Common myeloid progenitor, CD34-positive (primary cell): ENCODE measurements at regions of chr15 and their contacts with region 1.

Region 1: GRCh38 chr15:63752075-63752684 is 81.6 kb downstream of the HERC1 start:
- DNase-seq: peak; percentile 41 to 81 (median 76)
- H3K4me3 ChIP-seq: no peak overlapping the region
- H3K27ac ChIP-seq: no peak overlapping the region
- H3K4me1 ChIP-seq: no peaks in the 10 kb centered on the region
- H3K27me3 ChIP-seq: no peaks in the 10 kb centered on the region

Region 2: DNA sequence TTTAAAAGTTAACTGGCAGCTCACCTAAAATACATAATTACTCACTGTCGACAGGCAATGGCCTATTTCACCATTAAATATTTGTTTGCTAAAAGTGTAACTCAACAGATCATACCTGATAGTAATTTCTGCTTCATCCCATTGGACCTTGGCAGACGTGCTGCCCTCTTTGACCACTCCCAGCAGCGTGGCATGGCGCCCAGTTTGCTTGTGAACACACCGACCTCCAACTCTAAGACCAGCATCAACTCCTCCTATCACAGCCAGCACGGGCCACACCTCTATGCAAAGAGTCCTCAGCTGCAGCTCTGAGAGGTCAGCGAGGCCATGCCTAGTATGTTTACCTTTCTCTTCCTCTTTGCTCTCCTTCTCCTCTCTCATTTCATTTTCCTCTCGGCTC is 74.5 kb before region 1 on chr15:
- CTCF ChIA-PET with region 1: no interaction called
- POLR2A ChIA-PET with region 1: no interaction called
- DNase-seq: no peak
- H3K4me3 ChIP-seq: no peak overlapping the region
- H3K27ac ChIP-seq: no peak overlapping the region
- H3K4me1 ChIP-seq: no peaks in the 10 kb centered on the region
- H3K27me3 ChIP-seq: no peaks in the 10 kb centered on the region

Region 3: GRCh38 chr15:63735449-63735848 is 16.7 kb before region 1 on chr15:
- CTCF ChIA-PET with region 1: interaction called, 10 read pairs
- POLR2A ChIA-PET with region 1: interaction called, 3 read pairs
- DNase-seq: no peak
- H3K4me3 ChIP-seq: no peak overlapping the region
- H3K27ac ChIP-seq: no peak overlapping the region
- H3K4me1 ChIP-seq: no peaks in the 10 kb centered on the region
- H3K27me3 ChIP-seq: no peaks in the 10 kb centered on the region

Region 4: GRCh38 chr15:63805993-63806980 is 54.1 kb after region 1 on chr15:
- CTCF ChIA-PET with region 1: no interaction called
- POLR2A ChIA-PET with region 1: no interaction called
- DNase-seq: peak in 2 of 3 donors; percentile 26 to 47
- H3K4me3 ChIP-seq: no peak overlapping the region
- H3K27ac ChIP-seq: no peak overlapping the region
- H3K4me1 ChIP-seq: peaks cover 0 to 35% (median 17%) of the 10 kb centered on the region in 4 experiments
- H3K27me3 ChIP-seq: no peaks in the 10 kb centered on the region

Region 5: DNA sequence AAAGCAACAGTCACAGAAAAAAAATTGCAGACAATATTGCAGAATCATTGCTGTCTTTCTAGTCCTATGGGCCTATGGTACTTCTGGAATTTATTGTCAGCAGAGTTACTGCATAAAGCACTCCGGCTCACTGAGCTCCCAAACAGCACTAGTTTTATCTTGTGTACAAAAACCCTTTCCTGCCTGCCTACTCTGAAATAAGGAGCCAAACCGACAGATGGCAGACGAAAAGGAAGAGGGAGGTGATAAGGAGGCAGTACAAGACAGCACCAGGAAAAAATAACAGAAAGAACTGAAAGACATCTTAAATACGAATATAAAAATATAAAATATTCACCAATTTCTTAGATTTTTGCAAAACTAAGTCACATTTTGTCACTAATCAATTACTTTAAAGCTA is 66.0 kb after region 1 on chr15:
- CTCF ChIA-PET with region 1: interaction called, 13 read pairs
- POLR2A ChIA-PET with region 1: no interaction called
- DNase-seq: peak; percentile 72 to 86 (median 76)
- H3K4me3 ChIP-seq: peak overlapping the region in 5 of 7 experiments; percentile 1 to 56 (median 32)
- H3K27ac ChIP-seq: peak overlapping the region in 1 of 2 experiments; percentile 81
- H3K4me1 ChIP-seq: peaks cover 27 to 70% (median 38%) of the 10 kb centered on the region in 4 experiments
- H3K27me3 ChIP-seq: no peaks in the 10 kb centered on the region

Region 6: GRCh38 chr15:63986751-63987341 is 234.7 kb after region 1 on chr15:
- CTCF ChIA-PET with region 1: interaction called, 11 read pairs
- POLR2A ChIA-PET with region 1: no interaction called
- DNase-seq: peak; percentile 70 to 93 (median 91)
- H3K4me3 ChIP-seq: peak overlapping the region in 2 of 7 experiments; percentile 1 to 19
- H3K27ac ChIP-seq: peak overlapping the region in 1 of 2 experiments; percentile 55
- H3K4me1 ChIP-seq: peaks cover 19 to 60% (median 54%) of the 10 kb centered on the region in 4 experiments
- H3K27me3 ChIP-seq: no peaks in the 10 kb centered on the region

Region 7: DNA sequence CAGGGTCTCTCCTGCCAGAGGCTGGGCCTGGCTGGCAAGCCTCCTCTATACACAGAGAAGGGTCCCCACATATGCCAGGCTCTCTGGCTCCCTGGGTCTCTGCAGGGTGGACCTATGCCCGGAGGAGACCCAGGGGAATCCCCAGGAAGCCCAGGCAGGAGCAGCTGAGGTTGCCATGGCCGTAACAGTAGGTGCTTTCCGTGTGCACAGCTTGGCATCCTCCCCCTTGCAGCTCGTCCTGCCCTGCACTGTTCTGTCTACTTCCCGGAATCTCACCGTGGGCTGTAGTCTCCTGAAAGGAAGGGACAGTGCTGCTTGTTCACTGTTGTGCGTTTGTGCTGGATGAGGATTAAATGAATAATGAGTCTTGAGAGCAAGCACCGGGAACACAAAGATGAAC is 246.3 kb after region 1 on chr15:
- CTCF ChIA-PET with region 1: no interaction called
- POLR2A ChIA-PET with region 1: no interaction called
- DNase-seq: peak in 2 of 3 donors; percentile 34 to 46
- H3K4me3 ChIP-seq: no peak overlapping the region
- H3K27ac ChIP-seq: no peak overlapping the region
- H3K4me1 ChIP-seq: peaks cover 5 to 36% (median 34%) of the 10 kb centered on the region in 4 experiments
- H3K27me3 ChIP-seq: no peaks in the 10 kb centered on the region

Region 8: DNA sequence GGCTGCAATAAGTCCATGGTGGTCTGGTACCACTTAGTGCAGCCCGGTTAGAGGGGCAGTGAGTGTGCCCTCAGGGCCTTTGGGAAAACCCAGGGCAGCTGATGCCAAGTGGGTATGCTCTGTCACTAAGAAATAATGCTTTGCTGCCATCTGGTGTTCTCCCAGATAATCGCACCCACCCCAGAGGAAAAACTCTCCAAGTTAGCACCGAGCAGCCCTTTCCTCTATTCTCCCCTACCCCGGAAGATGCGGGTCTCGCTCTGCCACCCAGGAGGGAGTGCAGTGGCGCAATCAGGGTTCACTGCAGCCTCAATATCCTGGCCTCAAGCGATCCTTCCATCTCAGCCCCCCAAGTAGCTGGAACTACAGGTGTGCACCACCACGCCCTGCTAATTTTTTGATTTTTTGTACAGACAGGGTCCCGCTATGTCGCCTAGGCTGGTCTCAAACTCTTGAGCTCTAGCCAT is 315.4 kb after region 1 on chr15:
- CTCF ChIA-PET with region 1: interaction called, 86 read pairs
- POLR2A ChIA-PET with region 1: no interaction called
- DNase-seq: peak; percentile 66 to 79 (median 69)
- H3K4me3 ChIP-seq: peak overlapping the region in 1 of 7 experiments; percentile 34
- H3K27ac ChIP-seq: no peak overlapping the region
- H3K4me1 ChIP-seq: peaks cover 0 to 7% (median 3%) of the 10 kb centered on the region in 4 experiments
- H3K27me3 ChIP-seq: no peaks in the 10 kb centered on the region